ENCODE measurements at regions of chrX and their contacts with region 1.

Region 1: GRCh38 chrX:138775517-138775916 is 64.0 kb upstream of the FGF13 start:
- DNase-seq: peak; percentile 55
- H3K4me3 Mint-ChIP-seq: no peak overlapping the region
- H3K27ac Mint-ChIP-seq: no peak overlapping the region
- H3K4me1 Mint-ChIP-seq: peaks cover 13% of the 10 kb centered on the region
- H3K27me3 Mint-ChIP-seq: no peaks in the 10 kb centered on the region
- CTCF ChIP-seq: peak; percentile 37

Region 2: GRCh38 chrX:138791551-138791950 is 16.0 kb after region 1 on chrX:
- CTCF ChIA-PET with region 1: interaction called, 10 read pairs
- POLR2A ChIA-PET with region 1: no interaction called
- intact Hi-C with region 1: no loop called
- DNase-seq: peak; percentile 24
- H3K4me3 Mint-ChIP-seq: no peak overlapping the region
- H3K27ac Mint-ChIP-seq: peak overlapping the region; percentile 12
- H3K4me1 Mint-ChIP-seq: no peaks in the 10 kb centered on the region
- H3K27me3 Mint-ChIP-seq: no peaks in the 10 kb centered on the region
- CTCF ChIP-seq: no peak

Region 3: DNA sequence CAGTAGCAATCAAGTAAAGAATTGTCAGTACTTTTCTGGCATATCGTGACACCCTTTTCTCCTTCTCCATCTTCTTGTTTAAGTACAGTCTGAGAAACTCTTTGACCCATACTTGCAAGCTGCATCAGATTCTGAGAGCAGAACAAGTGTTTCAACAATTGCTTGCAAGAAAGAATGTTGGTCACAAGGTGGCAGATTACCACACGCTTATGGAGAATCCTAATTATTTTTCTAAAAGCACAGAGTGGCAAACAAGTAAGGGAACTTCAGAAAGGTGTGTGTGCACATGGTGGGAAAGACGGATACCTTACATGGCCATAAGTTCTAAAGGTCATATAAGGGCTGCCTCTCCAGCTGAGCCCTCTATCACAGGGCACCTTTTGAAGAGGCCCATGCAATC is 72.4 kb after region 1 on chrX:
- CTCF ChIA-PET with region 1: interaction called, 6 read pairs
- POLR2A ChIA-PET with region 1: no interaction called
- intact Hi-C with region 1: loop called (anchors 10 kb)
- DNase-seq: peak; percentile 31
- H3K4me3 Mint-ChIP-seq: no peak overlapping the region
- H3K27ac Mint-ChIP-seq: no peak overlapping the region
- H3K4me1 Mint-ChIP-seq: no peaks in the 10 kb centered on the region
- H3K27me3 Mint-ChIP-seq: no peaks in the 10 kb centered on the region
- CTCF ChIP-seq: peak; percentile 34

Region 4: GRCh38 chrX:138886769-138887168 is 111.3 kb after region 1 on chrX:
- CTCF ChIA-PET with region 1: no interaction called
- POLR2A ChIA-PET with region 1: no interaction called
- intact Hi-C with region 1: no loop called
- DNase-seq: peak; percentile 88
- H3K4me3 Mint-ChIP-seq: no peak overlapping the region
- H3K27ac Mint-ChIP-seq: peak overlapping the region; percentile 84
- H3K4me1 Mint-ChIP-seq: peaks cover 14% of the 10 kb centered on the region
- H3K27me3 Mint-ChIP-seq: no peaks in the 10 kb centered on the region
- CTCF ChIP-seq: no peak

Region 5: GRCh38 chrX:139759637-139760036 is 984.1 kb after region 1 on chrX:
- CTCF ChIA-PET with region 1: interaction called, 4 read pairs
- POLR2A ChIA-PET with region 1: no interaction called
- intact Hi-C with region 1: loop called (anchors 5 kb)
- DNase-seq: peak; percentile 40
- H3K4me3 Mint-ChIP-seq: no peak overlapping the region
- H3K27ac Mint-ChIP-seq: no peak overlapping the region
- H3K4me1 Mint-ChIP-seq: no peaks in the 10 kb centered on the region
- H3K27me3 Mint-ChIP-seq: no peaks in the 10 kb centered on the region
- CTCF ChIP-seq: peak; percentile 50

Region 6: DNA sequence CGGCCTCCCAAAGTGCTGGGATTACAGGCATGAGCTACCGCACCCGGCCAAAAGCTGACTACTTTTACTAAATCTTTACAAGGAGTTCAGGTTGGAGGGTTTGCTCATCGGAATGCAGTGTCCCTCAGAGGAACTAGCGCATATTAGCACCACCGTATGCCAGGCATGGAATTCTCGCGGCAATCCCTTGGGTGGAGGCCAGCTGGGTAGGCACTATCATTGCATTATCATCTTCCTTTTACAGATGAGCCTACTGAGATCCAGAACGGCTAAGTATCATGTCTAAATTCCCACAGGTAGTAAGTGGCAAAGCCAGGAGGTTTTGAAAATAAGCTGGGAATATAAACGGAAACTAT is 1195.9 kb after region 1 on chrX:
- CTCF ChIA-PET with region 1: interaction called, 3 read pairs
- POLR2A ChIA-PET with region 1: no interaction called
- intact Hi-C with region 1: loop called (anchors 2 kb)
- DNase-seq: no peak
- H3K4me3 Mint-ChIP-seq: no peak overlapping the region
- H3K27ac Mint-ChIP-seq: no peak overlapping the region
- H3K4me1 Mint-ChIP-seq: no peaks in the 10 kb centered on the region
- H3K27me3 Mint-ChIP-seq: no peaks in the 10 kb centered on the region
- CTCF ChIP-seq: no peak

Measured in MCF 10A (cell line).